Esophagus muscularis mucosa (tissue), 4 donors: ENCODE measurements at regions of chr1 and their contacts with region 1.

Region 1: DNA sequence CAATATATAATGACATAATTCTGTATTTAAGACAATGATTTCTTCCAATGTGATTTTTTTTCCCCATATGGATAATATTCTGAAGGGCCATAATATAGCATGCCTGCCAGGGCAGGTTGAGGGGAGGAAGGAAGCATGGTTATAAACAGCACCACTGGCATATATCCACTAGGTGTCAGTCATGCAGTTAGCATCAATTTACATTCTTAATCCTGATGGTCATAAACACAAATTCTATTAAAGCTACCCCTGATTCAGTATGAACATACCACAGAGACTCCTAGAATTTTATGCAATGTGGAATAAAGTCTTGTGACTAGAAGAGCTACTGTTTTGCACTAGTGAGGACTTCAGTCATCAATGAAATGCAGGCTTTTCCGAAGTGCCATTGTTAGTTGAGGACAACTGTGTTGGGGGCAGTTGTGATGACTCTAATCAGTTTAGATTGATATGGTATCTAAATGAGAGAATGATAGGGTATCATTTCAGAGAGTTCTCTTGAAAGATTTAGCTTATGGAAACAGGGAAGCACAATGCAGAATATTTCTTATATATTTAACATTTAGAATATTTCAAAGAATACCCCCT is 342.7 kb upstream of the NR5A2 start:
- DNase-seq: no peak
- H3K4me3 ChIP-seq: no peak overlapping the region
- H3K27ac ChIP-seq: no peak overlapping the region
- H3K4me1 ChIP-seq: peaks cover 0 to 7% (median 0%) of the 10 kb centered on the region in 4 donors
- H3K27me3 ChIP-seq: no peaks in the 10 kb centered on the region
- CTCF ChIP-seq: peak; percentile 31 to 61 (median 55)
- EP300 ChIP-seq: no peak
- POLR2A ChIP-seq: no peak

Region 2: DNA sequence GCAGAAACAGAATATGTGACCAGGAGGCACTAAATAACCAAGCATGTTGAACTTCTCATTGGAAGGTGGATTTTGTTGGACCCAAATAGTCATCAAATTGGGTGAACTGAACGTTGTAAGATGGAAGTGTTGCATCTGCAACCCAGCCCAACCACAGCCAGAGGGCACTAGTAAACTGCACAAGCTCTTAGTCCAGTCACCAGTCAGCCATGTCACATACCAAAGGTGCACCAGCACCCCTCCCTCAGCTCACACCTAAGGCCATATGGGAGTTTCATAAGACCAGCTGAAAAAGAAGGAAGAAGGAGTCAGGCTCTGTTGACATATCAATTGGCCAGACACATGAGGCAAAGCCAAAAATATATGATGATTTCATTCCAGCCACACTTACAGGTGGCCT is 139.0 kb before region 1 on chr1:
- intact Hi-C with region 1: no loop called
- DNase-seq: no peak
- H3K4me3 ChIP-seq: no peak overlapping the region
- H3K27ac ChIP-seq: no peak overlapping the region
- H3K4me1 ChIP-seq: no peaks in the 10 kb centered on the region
- H3K27me3 ChIP-seq: no peaks in the 10 kb centered on the region
- CTCF ChIP-seq: no peak
- EP300 ChIP-seq: no peak
- POLR2A ChIP-seq: no peak

Region 3: DNA sequence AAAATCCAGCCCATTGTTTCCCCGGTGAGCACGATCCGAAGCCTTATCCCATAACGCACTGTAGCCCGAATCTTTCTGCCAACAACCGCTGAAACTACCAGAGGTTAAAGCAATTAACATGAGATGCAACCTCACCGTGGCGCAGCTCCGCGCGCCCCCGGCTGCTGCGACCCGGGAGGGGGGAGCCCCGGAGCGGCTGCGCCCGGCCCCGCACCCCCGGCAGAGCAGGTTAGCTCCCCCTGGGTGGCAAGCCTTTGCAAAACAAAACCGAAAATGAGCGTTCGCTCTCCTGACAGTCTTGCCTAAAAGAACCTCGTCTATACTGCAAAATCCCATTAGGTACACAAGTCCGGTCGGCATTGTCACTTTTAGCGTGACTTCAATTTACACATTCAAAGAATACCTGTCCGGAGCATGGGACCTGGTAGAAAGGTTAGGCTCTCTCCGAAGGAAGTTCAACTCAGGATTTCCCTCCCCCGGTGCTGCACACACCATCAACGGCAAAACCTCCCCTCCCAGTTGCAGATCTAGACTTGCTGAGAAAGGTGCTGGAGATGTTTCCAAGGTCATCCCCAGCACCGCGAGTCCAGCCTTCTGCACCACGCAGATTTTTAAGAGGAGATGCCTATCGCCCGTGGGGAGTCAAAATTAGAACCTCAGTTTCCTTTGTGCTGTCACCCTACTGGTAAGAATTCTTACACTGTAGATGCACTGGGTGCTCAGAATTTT is 617.6 kb after region 1 on chr1:
- intact Hi-C with region 1: loop called (anchors 10 kb)
- DNase-seq: no peak
- H3K4me3 ChIP-seq: peak overlapping the region; percentile 64 to 73 (median 69)
- H3K27ac ChIP-seq: peak overlapping the region in 1 of 4 donors; percentile 27
- H3K4me1 ChIP-seq: peaks cover 5 to 21% (median 17%) of the 10 kb centered on the region in 4 donors
- H3K27me3 ChIP-seq: no peaks in the 10 kb centered on the region
- CTCF ChIP-seq: no peak
- EP300 ChIP-seq: no peak
- POLR2A ChIP-seq: no peak

Region 4: DNA sequence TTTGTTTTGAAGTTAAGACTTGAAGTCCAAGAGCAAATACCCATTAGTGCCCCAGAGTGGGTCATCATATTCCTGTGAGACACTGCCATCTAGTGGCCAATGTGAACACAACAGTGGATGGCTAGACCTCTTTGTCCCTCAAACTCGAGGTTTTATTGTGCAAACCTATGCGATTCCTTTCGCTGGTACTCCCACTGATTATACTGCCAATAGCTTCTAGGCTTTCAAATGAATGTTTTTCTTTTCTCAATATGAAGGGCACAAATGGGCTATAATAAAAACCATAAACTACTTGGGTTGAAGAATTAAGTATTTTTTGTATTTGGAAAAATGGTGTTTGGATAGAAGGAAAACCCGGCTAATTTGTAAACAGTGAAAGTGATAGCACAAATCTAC is 825.4 kb after region 1 on chr1:
- intact Hi-C with region 1: loop called (anchors 5 kb)
- DNase-seq: no peak
- H3K4me3 ChIP-seq: no peak overlapping the region
- H3K27ac ChIP-seq: no peak overlapping the region
- H3K4me1 ChIP-seq: no peaks in the 10 kb centered on the region
- H3K27me3 ChIP-seq: peaks cover 0 to 15% (median 0%) of the 10 kb centered on the region in 4 donors
- CTCF ChIP-seq: peak; percentile 81 to 94 (median 84)
- EP300 ChIP-seq: no peak
- POLR2A ChIP-seq: no peak